ENCODE measurements at regions of chr19 and their contacts with region 1.

Region 1: GRCh38 chr19:41263850-41264580 is at the start of gene HNRNPUL1:
- DNase-seq: peak; percentile 99 to 100
- ATAC-seq: peak; percentile 69 to 86 (median 70)
- H3K4me3 ChIP-seq: peak within 1 kb of the TSS; percentile 57
- H3K4me3 Mint-ChIP-seq: peak within 1 kb of the TSS; percentile 91
- H3K27ac ChIP-seq: peak within 1 kb of the TSS; percentile 96
- H3K27ac Mint-ChIP-seq: peak within 1 kb of the TSS; percentile 96 to 100
- H3K4me1 ChIP-seq: peaks cover 39% of the 10 kb centered on the region
- H3K4me1 Mint-ChIP-seq: peaks cover 61 to 66% of the 10 kb centered on the region in 2 donors
- H3K27me3 ChIP-seq: no peaks in the 10 kb centered on the region
- H3K27me3 Mint-ChIP-seq: no peaks in the 10 kb centered on the region
- CTCF ChIP-seq: peak; percentile 34
- total RNA-seq, gene HNRNPUL1: 279 to 360 (median 315) TPM

Region 2: GRCh38 chr19:40777937-40778705 is 485.9 kb before region 1 on chr19 and contains the start of gene RAB4B:
- intact Hi-C with region 1: loop called (anchors 1 kb)
- DNase-seq: peak; percentile 100
- ATAC-seq: peak; percentile 80 to 93 (median 82)
- H3K4me3 ChIP-seq: peak within 1 kb of the TSS; percentile 92
- H3K4me3 Mint-ChIP-seq: peak within 1 kb of the TSS; percentile 97
- H3K27ac ChIP-seq: peak within 1 kb of the TSS; percentile 99
- H3K27ac Mint-ChIP-seq: peak within 1 kb of the TSS; percentile 95 to 96
- H3K4me1 ChIP-seq: peaks cover 26% of the 10 kb centered on the region
- H3K4me1 Mint-ChIP-seq: peaks cover 37 to 51% of the 10 kb centered on the region in 2 donors
- H3K27me3 ChIP-seq: no peaks in the 10 kb centered on the region
- H3K27me3 Mint-ChIP-seq: no peaks in the 10 kb centered on the region
- CTCF ChIP-seq: no peak
- total RNA-seq, gene RAB4B: 97.8 to 99.8 (median 98.6) TPM

Region 3: DNA sequence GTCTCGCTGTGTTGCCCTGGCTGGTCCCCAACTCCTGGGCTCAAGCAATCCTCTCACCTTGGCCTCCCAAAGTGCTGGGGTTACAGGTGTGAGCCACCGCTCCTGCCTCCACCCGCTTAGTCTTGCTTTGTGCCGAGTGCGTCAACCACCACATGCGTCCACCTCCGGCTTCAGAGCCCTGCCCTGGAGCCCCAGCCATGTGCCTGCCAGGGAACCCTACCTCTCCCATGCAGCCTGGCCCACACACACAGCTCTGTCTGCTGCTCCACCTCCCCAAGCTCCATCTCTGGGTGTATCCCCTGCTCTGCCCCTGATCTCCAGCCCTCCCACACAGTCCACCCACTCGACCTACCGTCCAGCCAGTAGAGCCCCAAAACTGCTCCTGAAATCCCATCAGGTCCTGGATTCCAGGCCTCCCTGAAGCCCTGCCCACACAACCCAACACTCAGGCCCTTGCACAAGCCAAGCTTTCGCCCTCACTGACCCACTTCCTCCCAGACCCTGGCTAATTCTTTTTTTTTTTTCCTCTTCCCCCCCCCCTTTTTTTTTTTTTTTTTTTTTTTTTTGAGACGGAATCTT is 140.2 kb before region 1 on chr19:
- intact Hi-C with region 1: loop called (anchors 1 kb)
- DNase-seq: no peak
- ATAC-seq: no peak
- H3K4me3 ChIP-seq: no peak overlapping the region
- H3K4me3 Mint-ChIP-seq: peak overlapping the region; percentile 28
- H3K27ac ChIP-seq: no peak overlapping the region
- H3K27ac Mint-ChIP-seq: peak overlapping the region; percentile 67 to 96
- H3K4me1 ChIP-seq: peaks cover 53% of the 10 kb centered on the region
- H3K4me1 Mint-ChIP-seq: peaks cover 45 to 70% of the 10 kb centered on the region in 2 donors
- H3K27me3 ChIP-seq: no peaks in the 10 kb centered on the region
- H3K27me3 Mint-ChIP-seq: peaks cover 0 to 4% of the 10 kb centered on the region in 2 donors
- CTCF ChIP-seq: no peak

Region 4: GRCh38 chr19:41298348-41298964 is 34.4 kb after region 1 on chr19:
- intact Hi-C with region 1: loop called (anchors 1 kb)
- DNase-seq: peak; percentile 62 to 77
- ATAC-seq: peak; percentile 24 to 43 (median 33)
- H3K4me3 ChIP-seq: no peak overlapping the region
- H3K4me3 Mint-ChIP-seq: peak overlapping the region; percentile 65
- H3K27ac ChIP-seq: peak overlapping the region; percentile 87
- H3K27ac Mint-ChIP-seq: peak overlapping the region; percentile 91 to 94
- H3K4me1 ChIP-seq: peaks cover 71% of the 10 kb centered on the region
- H3K4me1 Mint-ChIP-seq: peaks cover 76 to 85% of the 10 kb centered on the region in 2 donors
- H3K27me3 ChIP-seq: no peaks in the 10 kb centered on the region
- H3K27me3 Mint-ChIP-seq: no peaks in the 10 kb centered on the region
- CTCF ChIP-seq: no peak

Region 5: GRCh38 chr19:41327576-41328156 is 63.7 kb after region 1 on chr19:
- intact Hi-C with region 1: loop called (anchors 1 kb)
- DNase-seq: peak; percentile 89 to 96
- ATAC-seq: peak; percentile 46 to 78 (median 61)
- H3K4me3 ChIP-seq: peak overlapping the region; percentile 25
- H3K4me3 Mint-ChIP-seq: peak overlapping the region; percentile 80
- H3K27ac ChIP-seq: peak overlapping the region; percentile 91
- H3K27ac Mint-ChIP-seq: peak overlapping the region; percentile 94 to 97
- H3K4me1 ChIP-seq: peaks cover 98% of the 10 kb centered on the region
- H3K4me1 Mint-ChIP-seq: peaks cover 83 to 88% of the 10 kb centered on the region in 2 donors
- H3K27me3 ChIP-seq: no peaks in the 10 kb centered on the region
- H3K27me3 Mint-ChIP-seq: no peaks in the 10 kb centered on the region
- CTCF ChIP-seq: no peak

Region 6: GRCh38 chr19:41363753-41364523 is 99.9 kb after region 1 on chr19 and contains the start of gene B9D2:
- intact Hi-C with region 1: loop called (anchors 1 kb)
- DNase-seq: peak; percentile 96 to 99
- ATAC-seq: peak; percentile 89 to 97 (median 92)
- H3K4me3 ChIP-seq: peak within 1 kb of the TSS; percentile 93
- H3K4me3 Mint-ChIP-seq: peak within 1 kb of the TSS; percentile 89
- H3K27ac ChIP-seq: peak within 1 kb of the TSS; percentile 99
- H3K27ac Mint-ChIP-seq: peak within 1 kb of the TSS; percentile 98
- H3K4me1 ChIP-seq: peaks cover 18% of the 10 kb centered on the region
- H3K4me1 Mint-ChIP-seq: peaks cover 17 to 22% of the 10 kb centered on the region in 2 donors
- H3K27me3 ChIP-seq: no peaks in the 10 kb centered on the region
- H3K27me3 Mint-ChIP-seq: no peaks in the 10 kb centered on the region
- CTCF ChIP-seq: no peak
- total RNA-seq, gene B9D2: 18.1 to 22.2 (median 18.7) TPM

Region 7: DNA sequence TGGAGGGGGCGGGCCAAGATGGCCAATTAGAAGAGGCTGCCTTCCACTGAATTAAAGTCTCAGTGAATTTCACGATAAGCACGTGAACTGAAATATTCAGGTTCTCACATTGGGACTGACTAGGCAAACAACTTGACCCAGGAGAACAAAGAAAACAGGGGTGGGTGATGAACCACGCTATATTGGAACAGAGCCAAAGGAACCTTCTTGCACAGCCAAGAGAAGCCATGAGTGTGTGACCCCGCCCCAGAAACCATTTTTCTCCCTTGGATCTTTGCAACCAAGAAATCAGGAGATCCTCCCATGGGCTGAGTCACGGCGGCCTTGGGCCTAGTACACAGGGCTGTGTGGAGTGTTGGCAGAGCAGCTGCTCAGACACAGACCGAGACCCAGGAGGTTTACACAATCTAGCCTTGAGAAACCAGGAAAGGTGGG is 215.8 kb after region 1 on chr19:
- intact Hi-C with region 1: no loop called
- DNase-seq: no peak
- ATAC-seq: no peak
- H3K4me3 ChIP-seq: no peak overlapping the region
- H3K4me3 Mint-ChIP-seq: no peak overlapping the region
- H3K27ac ChIP-seq: no peak overlapping the region
- H3K27ac Mint-ChIP-seq: no peak overlapping the region
- H3K4me1 ChIP-seq: no peaks in the 10 kb centered on the region
- H3K4me1 Mint-ChIP-seq: no peaks in the 10 kb centered on the region
- H3K27me3 ChIP-seq: no peaks in the 10 kb centered on the region
- H3K27me3 Mint-ChIP-seq: peaks cover 36 to 68% of the 10 kb centered on the region in 2 donors
- CTCF ChIP-seq: no peak

Region 8: DNA sequence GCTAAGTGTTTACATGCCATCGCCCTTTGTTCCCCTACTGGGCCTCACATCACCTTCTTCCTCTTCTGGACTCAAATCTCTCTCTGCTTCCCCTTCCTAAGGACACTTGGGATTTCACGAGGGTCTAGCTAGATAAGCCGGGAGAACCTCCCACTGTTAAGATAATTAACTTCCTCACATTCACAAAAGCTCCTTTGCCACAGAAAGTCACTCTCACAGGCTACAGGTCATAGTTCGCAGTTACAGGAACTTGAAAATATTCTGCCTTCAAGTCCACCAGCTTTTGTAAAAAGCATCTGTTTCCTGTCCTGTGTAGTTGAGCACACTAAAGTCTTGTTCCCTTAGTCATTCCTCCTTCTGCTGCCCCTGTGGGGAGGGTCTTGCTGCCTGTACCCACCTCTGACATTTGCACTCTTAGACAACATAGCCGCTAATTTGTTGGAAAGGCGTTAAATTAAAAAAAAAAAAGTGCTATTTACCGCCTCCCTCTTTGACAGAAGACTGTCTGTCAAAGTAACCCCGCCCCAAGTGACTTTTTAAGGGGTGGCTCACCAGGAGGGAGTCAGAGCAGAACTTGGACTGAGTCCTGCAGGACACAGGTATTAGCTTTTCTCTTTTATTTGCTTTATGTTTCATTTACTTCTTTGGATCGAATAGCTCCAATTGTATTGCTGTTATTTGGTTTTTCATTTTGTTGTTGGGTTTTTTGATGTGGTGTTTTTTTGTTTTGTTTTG is 285.1 kb after region 1 on chr19:
- intact Hi-C with region 1: loop called (anchors 5 kb)
- DNase-seq: peak; percentile 67 to 87
- ATAC-seq: peak; percentile 68 to 81 (median 78)
- H3K4me3 ChIP-seq: peak overlapping the region; percentile 89
- H3K4me3 Mint-ChIP-seq: peak overlapping the region; percentile 99
- H3K27ac ChIP-seq: peak overlapping the region; percentile 88
- H3K27ac Mint-ChIP-seq: peak overlapping the region; percentile 95 to 96
- H3K4me1 ChIP-seq: peaks cover 62% of the 10 kb centered on the region
- H3K4me1 Mint-ChIP-seq: peaks cover 72 to 74% of the 10 kb centered on the region in 2 donors
- H3K27me3 ChIP-seq: no peaks in the 10 kb centered on the region
- H3K27me3 Mint-ChIP-seq: no peaks in the 10 kb centered on the region
- CTCF ChIP-seq: no peak